Activated CD8-positive, alpha-beta memory T cell treated with anti-CD3 and anti-CD28 coated beads, Interleukin-2, amount 10 ng/mL, durations not matched to agents 7 days and 5 days (primary cell): ENCODE measurements at regions of chr7 and their contacts with region 1.

Region 1: GRCh38 chr7:5665094-5666025 is 116.1 kb downstream of the RNF216 start:
- DNase-seq: peak; percentile 75
- ATAC-seq: peak; percentile 74
- H3K4me3 Mint-ChIP-seq: no peak overlapping the region
- H3K27ac Mint-ChIP-seq: no peak overlapping the region
- H3K4me1 Mint-ChIP-seq: peaks cover 16% of the 10 kb centered on the region
- H3K27me3 Mint-ChIP-seq: no peaks in the 10 kb centered on the region

Region 2: DNA sequence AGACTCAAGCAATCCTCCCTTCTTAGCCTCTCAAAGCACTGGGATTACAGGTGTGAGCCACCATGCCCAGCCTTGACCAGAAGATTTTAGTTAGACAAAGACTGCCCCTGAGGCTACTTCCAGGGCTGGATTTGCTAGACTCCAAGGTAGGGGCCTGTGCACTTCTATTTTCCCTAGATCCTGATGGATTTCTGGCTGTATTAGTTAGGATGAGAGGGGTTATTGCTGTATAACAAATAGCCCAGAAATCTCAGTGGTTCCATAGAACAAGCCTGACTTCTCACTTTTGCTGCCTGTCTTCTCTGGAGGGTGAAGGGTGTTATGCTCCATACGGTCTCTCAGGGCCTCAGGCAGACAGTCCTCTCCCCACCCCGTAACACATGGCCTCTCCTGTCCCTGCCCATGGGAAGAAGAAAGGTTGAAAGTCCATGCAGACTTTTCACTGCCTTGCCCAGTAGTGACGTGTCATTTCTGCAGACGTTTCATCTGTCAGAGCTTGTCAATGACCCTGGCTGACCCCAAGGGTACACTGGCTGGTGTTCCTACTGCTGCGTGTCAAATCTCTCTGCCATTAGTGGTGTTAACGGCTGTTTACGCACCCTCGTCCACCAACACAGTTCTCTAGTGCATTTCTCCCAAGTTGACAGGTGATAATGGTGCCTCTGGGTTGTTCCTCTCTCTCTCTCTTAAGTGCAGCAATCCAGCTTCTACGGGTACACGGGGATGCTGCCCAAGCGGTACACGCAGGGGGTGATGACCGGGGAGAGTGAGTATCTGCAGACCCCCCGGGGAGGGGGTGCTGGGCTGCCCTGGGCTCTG is 371.0 kb before region 1 on chr7:
- CTCF ChIA-PET with region 1: no interaction called
- DNase-seq: no peak
- ATAC-seq: no peak
- H3K4me3 Mint-ChIP-seq: no peak overlapping the region
- H3K27ac Mint-ChIP-seq: no peak overlapping the region
- H3K4me1 Mint-ChIP-seq: peaks cover 9% of the 10 kb centered on the region
- H3K27me3 Mint-ChIP-seq: peaks cover 22% of the 10 kb centered on the region

Region 3: DNA sequence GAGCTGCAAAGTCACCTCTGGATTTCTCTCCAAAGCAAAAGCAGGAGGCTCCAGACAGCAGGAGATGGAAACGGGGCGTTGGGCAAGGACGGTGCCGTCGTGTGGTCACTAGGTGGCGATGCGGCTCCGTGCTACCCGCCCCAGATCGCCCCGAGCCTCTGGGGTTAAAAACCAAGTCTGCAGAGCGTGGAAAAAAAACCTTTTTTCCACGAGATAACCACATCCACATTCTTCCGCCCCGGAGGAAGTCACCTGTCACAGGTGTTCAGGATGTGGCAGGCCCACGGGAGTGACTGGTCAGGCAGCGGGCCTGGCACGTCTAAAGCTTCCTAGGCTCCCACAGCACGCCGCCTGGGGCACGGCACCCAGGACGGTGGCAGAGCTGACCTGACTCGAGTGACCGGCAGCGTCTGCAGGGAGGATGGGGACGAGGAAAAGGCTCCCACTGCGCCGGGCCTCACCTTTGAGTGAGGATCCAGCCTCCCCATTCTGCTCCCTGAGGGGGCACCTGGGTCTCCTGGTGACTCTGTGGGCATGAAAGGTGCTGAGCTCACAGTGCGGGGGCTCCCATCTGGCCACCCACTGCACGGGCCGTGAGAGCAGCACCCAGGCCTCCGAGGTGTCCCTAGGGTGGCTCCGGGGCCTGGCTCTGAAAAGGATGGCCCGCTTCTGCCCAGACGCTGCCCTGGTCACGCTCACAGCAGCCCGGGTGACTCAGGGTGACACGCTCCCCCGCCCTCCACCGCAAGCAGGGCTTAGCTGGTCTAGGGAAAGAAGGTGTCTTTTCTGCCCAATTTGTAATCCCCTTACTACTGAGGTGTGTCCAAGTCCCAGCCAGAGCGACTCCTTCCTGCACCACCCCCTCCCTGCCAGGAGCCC is 170.4 kb before region 1 on chr7:
- CTCF ChIA-PET with region 1: interaction called, 34 read pairs
- DNase-seq: peak; percentile 85
- ATAC-seq: peak; percentile 93
- H3K4me3 Mint-ChIP-seq: no peak overlapping the region
- H3K27ac Mint-ChIP-seq: peak overlapping the region; percentile 11
- H3K4me1 Mint-ChIP-seq: peaks cover 22% of the 10 kb centered on the region
- H3K27me3 Mint-ChIP-seq: no peaks in the 10 kb centered on the region

Region 4: GRCh38 chr7:5619419-5620124 is 45.8 kb before region 1 on chr7:
- CTCF ChIA-PET with region 1: no interaction called
- DNase-seq: no peak
- ATAC-seq: no peak
- H3K4me3 Mint-ChIP-seq: no peak overlapping the region
- H3K27ac Mint-ChIP-seq: no peak overlapping the region
- H3K4me1 Mint-ChIP-seq: no peaks in the 10 kb centered on the region
- H3K27me3 Mint-ChIP-seq: no peaks in the 10 kb centered on the region

Region 5: GRCh38 chr7:5636914-5637313 is 28.4 kb before region 1 on chr7:
- CTCF ChIA-PET with region 1: interaction called, 44 read pairs
- DNase-seq: no peak
- ATAC-seq: no peak
- H3K4me3 Mint-ChIP-seq: no peak overlapping the region
- H3K27ac Mint-ChIP-seq: no peak overlapping the region
- H3K4me1 Mint-ChIP-seq: peaks cover 16% of the 10 kb centered on the region
- H3K27me3 Mint-ChIP-seq: no peaks in the 10 kb centered on the region

Region 6: DNA sequence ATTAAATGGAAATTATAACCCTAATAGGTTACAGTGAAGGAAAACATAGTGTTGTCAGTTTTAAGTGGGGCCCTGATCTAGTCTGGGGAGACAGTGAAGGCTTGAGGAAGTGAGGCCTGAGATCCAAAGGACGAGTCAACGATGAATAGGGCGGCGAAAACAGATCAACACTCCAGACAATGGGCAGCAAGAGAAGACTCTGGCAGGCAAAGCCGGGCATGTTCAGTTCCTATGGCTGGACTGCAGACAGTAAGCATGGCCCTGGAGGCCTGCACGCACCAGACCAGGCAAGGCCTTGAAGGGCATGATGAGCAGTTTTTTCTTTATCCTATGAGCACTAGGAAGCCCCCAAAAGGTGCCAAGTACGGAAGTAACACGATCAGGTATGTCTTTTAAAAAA is 11.7 kb before region 1 on chr7:
- CTCF ChIA-PET with region 1: interaction called, 12 read pairs
- DNase-seq: no peak
- ATAC-seq: no peak
- H3K4me3 Mint-ChIP-seq: no peak overlapping the region
- H3K27ac Mint-ChIP-seq: no peak overlapping the region
- H3K4me1 Mint-ChIP-seq: peaks cover 9% of the 10 kb centered on the region
- H3K27me3 Mint-ChIP-seq: no peaks in the 10 kb centered on the region

Region 7: DNA sequence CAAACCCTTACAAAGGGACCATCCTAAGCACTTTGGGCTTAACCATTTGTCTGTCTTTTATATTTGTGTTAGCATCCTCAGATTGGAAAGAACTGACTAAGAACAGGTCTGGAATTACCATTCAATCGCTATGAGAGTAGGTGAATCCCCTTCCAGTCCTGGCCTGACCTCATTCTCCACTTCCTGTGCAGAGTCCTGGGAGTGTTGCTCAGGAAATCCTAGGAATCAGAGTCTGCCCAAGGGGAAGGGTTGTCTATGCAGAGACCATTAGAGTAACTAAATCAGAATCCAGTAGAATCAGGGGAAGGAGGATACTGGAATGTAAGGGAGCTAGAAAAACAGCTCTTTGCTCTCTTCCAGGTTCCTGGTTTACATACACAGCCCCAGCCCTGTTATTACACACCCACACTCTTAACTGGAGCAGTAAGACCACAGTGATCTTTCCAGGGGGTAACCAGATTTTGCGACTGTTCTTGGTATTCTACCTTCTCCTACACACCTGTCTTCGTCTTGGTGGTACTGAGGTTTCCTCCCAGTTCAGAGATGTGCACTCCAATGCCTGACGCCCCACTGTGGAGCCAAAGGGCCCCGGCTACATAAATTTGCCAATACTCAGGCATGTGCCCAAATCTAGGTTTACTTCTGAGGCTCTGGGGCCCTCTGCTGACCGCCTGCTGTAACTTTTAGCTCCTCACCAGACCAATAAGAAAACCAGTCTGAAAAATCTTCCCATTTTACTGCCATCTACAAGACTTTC is 12.4 kb after region 1 on chr7:
- CTCF ChIA-PET with region 1: interaction called, 28 read pairs
- DNase-seq: peak; percentile 58
- ATAC-seq: peak; percentile 59
- H3K4me3 Mint-ChIP-seq: no peak overlapping the region
- H3K27ac Mint-ChIP-seq: no peak overlapping the region
- H3K4me1 Mint-ChIP-seq: peaks cover 9% of the 10 kb centered on the region
- H3K27me3 Mint-ChIP-seq: no peaks in the 10 kb centered on the region

Region 8: DNA sequence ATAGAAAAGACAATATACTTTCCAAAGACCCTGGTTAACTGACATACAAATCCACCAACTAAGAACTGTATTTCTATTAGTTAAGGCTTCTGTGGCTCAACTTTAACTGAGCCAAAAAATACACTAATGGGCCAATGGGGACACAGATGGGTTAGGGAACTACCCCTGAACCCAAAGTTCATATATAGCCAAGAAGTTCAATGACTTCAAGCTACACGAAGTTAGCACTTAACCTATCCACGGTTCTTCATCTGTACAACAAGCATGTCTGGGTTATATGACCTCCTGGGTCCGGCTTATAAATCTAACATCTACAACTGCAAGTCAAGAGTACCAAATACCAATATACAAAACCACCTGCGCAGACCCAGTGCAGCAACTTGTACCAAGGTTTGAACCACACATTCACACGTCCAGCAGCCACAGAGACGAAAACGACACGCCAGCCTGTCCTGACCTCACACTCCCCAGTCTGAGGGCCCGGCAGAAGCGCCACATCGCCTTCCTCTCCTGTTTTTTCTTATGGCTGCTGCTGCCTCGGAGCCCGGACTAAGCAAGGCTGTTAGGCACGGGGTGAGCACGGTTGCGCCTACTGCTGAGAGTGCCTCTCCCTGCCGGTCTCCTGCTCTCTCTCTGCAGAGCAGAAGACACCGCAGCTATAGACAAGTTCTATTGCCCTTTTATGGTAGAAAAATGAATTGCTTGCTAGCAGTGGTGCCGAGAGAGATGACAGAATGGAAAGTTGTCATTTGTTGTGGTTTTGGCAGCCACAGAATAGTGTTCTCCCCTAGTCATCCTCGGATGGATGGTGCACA is 29.8 kb after region 1 on chr7:
- CTCF ChIA-PET with region 1: interaction called, 14 read pairs
- DNase-seq: peak; percentile 88
- ATAC-seq: peak; percentile 91
- H3K4me3 Mint-ChIP-seq: peak overlapping the region; percentile 45
- H3K27ac Mint-ChIP-seq: peak overlapping the region; percentile 72
- H3K4me1 Mint-ChIP-seq: peaks cover 61% of the 10 kb centered on the region
- H3K27me3 Mint-ChIP-seq: peaks cover 24% of the 10 kb centered on the region

Region 9: GRCh38 chr7:5704534-5704922 is 39.2 kb after region 1 on chr7:
- CTCF ChIA-PET with region 1: interaction called, 12 read pairs
- DNase-seq: peak; percentile 78
- ATAC-seq: no peak
- H3K4me3 Mint-ChIP-seq: no peak overlapping the region
- H3K27ac Mint-ChIP-seq: no peak overlapping the region
- H3K4me1 Mint-ChIP-seq: peaks cover 26% of the 10 kb centered on the region
- H3K27me3 Mint-ChIP-seq: no peaks in the 10 kb centered on the region

Region 10: GRCh38 chr7:5850944-5851343 is 185.6 kb after region 1 on chr7:
- CTCF ChIA-PET with region 1: no interaction called
- DNase-seq: no peak
- ATAC-seq: no peak
- H3K4me3 Mint-ChIP-seq: no peak overlapping the region
- H3K27ac Mint-ChIP-seq: no peak overlapping the region
- H3K4me1 Mint-ChIP-seq: no peaks in the 10 kb centered on the region
- H3K27me3 Mint-ChIP-seq: no peaks in the 10 kb centered on the region